Posterior vena cava (tissue), 2 donors: ENCODE measurements at regions of chr9 and their contacts with region 1.

Region 1: DNA sequence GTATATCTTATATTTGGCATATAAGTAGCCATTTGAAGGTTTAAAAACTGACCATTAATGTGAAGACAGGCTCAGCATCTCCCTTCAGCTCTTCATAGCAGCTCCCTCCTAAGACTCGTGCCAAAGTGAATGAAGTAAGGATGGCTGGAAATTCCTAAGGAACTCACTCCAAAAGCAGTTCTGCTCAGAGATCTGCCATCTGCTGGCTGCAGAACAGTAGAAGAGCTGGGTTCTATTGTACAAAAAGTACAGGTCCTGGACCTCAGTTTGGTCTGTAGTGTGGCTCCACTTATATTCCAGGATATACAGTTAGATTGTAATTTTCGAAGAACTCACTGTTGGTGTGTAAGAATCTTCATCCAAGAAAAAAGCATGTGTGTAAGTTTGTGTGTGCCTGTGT is 104.9 kb upstream of the RUSC2 start:
- DNase-seq: no peak

Region 2: GRCh38 chr9:33446946-33447798 is 1937.9 kb before region 1 on chr9 and contains the start of gene AQP3:
- intact Hi-C with region 1: no loop called
- DNase-seq: peak; percentile 88
- total RNA-seq, gene AQP3: 5.5 to 8.4 TPM

Region 3: GRCh38 chr9:35464141-35465025 is 79.3 kb after region 1 on chr9:
- intact Hi-C with region 1: loop called in 1 of 2 experiments (anchors 10 kb)
- DNase-seq: no peak